WTC11 (cell line): ENCODE measurements at regions of chr9 and their contacts with region 1.

Region 1: GRCh38 chr9:84966876-84967833 is 297.6 kb downstream of the NTRK2 start:
- DNase-seq: peak; percentile 80
- ATAC-seq: peak; percentile 100
- H3K4me3 Mint-ChIP-seq: no peak overlapping the region
- H3K27ac Mint-ChIP-seq: no peak overlapping the region
- H3K4me1 Mint-ChIP-seq: no peaks in the 10 kb centered on the region
- H3K27me3 Mint-ChIP-seq: peaks cover 4% of the 10 kb centered on the region
- CTCF ChIP-seq: peak; percentile 67

Region 2: GRCh38 chr9:84397151-84397728 is 569.9 kb before region 1 on chr9:
- CTCF ChIA-PET with region 1: interaction called, 12 read pairs
- POLR2A ChIA-PET with region 1: no interaction called
- DNase-seq: peak; percentile 77
- ATAC-seq: peak; percentile 90
- H3K4me3 Mint-ChIP-seq: no peak overlapping the region
- H3K27ac Mint-ChIP-seq: no peak overlapping the region
- H3K4me1 Mint-ChIP-seq: no peaks in the 10 kb centered on the region
- H3K27me3 Mint-ChIP-seq: no peaks in the 10 kb centered on the region; the same call in 1 of the 2 replicates
- CTCF ChIP-seq: peak; percentile 76

Region 3: GRCh38 chr9:84668196-84669012 is 298.8 kb before region 1 on chr9:
- CTCF ChIA-PET with region 1: interaction called, 15 read pairs
- POLR2A ChIA-PET with region 1: no interaction called
- DNase-seq: peak; percentile 84
- ATAC-seq: peak; percentile 76
- H3K4me3 Mint-ChIP-seq: peak overlapping the region; percentile 74
- H3K27ac Mint-ChIP-seq: no peak overlapping the region
- H3K4me1 Mint-ChIP-seq: peaks cover 16% of the 10 kb centered on the region
- H3K27me3 Mint-ChIP-seq: peaks cover 85% of the 10 kb centered on the region
- CTCF ChIP-seq: peak; percentile 58

Region 4: GRCh38 chr9:84932915-84933527 is 34.1 kb before region 1 on chr9:
- CTCF ChIA-PET with region 1: interaction called, 12 read pairs
- POLR2A ChIA-PET with region 1: no interaction called
- DNase-seq: no peak
- ATAC-seq: peak; percentile 86
- H3K4me3 Mint-ChIP-seq: no peak overlapping the region
- H3K27ac Mint-ChIP-seq: peak overlapping the region; percentile 42
- H3K4me1 Mint-ChIP-seq: peaks cover 22% of the 10 kb centered on the region
- H3K27me3 Mint-ChIP-seq: no peaks in the 10 kb centered on the region
- CTCF ChIP-seq: no peak

Region 5: DNA sequence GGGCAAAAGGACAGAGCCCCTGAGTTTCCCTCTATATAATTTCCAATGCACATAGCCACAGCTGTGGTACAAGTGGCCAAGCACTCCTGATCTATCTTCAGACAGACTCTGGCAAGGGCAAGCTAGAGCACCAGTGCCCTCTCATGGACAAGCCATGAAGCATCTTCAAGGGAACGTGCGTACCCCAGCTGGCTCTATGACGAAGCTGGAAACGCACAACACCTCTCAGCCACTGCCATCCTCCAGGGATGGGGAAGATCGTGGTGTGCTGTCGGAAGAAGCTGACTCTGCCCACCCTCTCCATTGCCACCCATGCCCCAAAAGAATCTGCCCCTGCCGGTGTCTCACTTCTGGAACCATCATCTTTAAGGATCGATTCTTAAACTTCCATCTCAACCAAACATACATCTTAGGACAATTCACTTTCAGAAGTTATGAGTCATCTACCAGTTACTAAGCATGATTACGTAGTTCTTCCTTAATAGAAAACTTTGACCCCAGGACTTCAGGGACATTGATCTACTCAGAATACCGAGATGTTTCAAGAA is 291.7 kb after region 1 on chr9:
- CTCF ChIA-PET with region 1: interaction called, 10 read pairs
- POLR2A ChIA-PET with region 1: no interaction called
- DNase-seq: peak; percentile 75
- ATAC-seq: peak; percentile 100
- H3K4me3 Mint-ChIP-seq: no peak overlapping the region
- H3K27ac Mint-ChIP-seq: no peak overlapping the region
- H3K4me1 Mint-ChIP-seq: peaks cover 5% of the 10 kb centered on the region
- H3K27me3 Mint-ChIP-seq: no peaks in the 10 kb centered on the region
- CTCF ChIP-seq: peak; percentile 61